Common myeloid progenitor, CD34-positive (primary cell): ENCODE measurements at regions of chr1 and their contacts with region 1.

Region 1: DNA sequence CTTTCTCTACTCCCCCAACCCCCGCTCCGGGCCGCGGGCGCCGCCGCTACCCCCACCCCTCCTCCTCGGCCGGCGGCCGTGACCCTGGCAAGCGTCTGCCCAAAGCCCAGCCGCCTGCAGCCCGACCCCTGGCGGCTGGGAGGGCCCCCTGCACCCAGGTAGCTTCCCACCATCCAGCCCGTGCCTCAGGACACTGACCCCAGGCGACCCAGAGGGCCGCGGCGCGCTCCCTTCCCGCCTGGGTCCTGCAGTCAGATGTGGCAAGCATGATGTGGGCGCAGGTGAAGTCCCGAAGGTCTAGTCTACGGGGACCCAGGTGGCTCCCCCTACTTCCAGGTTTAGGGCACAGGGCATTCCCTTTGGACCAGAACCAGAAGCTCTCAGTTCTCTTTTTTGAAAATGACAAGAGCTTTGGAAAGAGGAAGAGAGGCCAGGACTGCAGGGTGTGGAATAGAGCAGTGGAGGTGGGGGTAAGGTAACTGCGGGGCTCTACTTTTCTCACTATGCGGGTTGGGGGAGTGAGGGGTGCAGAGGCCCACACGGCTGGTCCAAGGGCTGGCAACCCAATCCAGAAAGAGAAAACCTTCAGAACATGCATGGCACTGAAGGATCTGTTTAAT is at the start of gene DENND4B:
- DNase-seq: peak; percentile 77 to 88 (median 87)
- H3K4me3 ChIP-seq: peak within 1 kb of the TSS; percentile 71 to 92 (median 83)
- H3K27ac ChIP-seq: peak within 1 kb of the TSS; percentile 83 to 91
- H3K4me1 ChIP-seq: peaks cover 4 to 33% (median 30%) of the 10 kb centered on the region in 4 experiments
- H3K27me3 ChIP-seq: no peaks in the 10 kb centered on the region

Region 2: GRCh38 chr1:153833171-153833570 is 113.6 kb before region 1 on chr1:
- CTCF ChIA-PET with region 1: no interaction called
- POLR2A ChIA-PET with region 1: no interaction called
- DNase-seq: no peak
- H3K4me3 ChIP-seq: no peak overlapping the region
- H3K27ac ChIP-seq: no peak overlapping the region
- H3K4me1 ChIP-seq: peaks cover 0 to 9% (median 0%) of the 10 kb centered on the region in 4 experiments
- H3K27me3 ChIP-seq: no peaks in the 10 kb centered on the region

Region 3: GRCh38 chr1:153906396-153906795 is 40.3 kb before region 1 on chr1:
- CTCF ChIA-PET with region 1: no interaction called
- POLR2A ChIA-PET with region 1: no interaction called
- DNase-seq: no peak
- H3K4me3 ChIP-seq: no peak overlapping the region
- H3K27ac ChIP-seq: no peak overlapping the region
- H3K4me1 ChIP-seq: no peaks in the 10 kb centered on the region
- H3K27me3 ChIP-seq: no peaks in the 10 kb centered on the region

Region 4: DNA sequence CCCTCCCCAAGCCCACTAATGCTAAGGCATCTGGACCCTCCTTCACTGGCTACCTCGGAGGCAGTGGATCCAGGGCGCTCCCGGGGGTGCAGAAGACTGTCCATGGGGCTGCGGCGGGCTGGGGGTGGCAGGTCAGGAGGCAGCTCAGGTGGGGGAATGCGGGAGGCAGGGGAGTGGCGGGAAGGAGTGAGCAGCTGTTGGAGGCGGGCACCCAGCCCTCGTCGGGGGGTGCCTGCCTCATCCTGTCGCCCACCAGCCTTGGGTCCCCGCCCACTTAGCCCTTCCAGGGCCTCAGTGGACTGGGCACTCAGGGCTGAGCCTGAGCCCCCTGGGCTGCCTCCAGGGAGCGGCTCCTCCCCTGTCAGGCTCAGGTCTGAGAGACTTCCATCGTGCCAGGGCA is 13.3 kb before region 1 on chr1:
- CTCF ChIA-PET with region 1: interaction called, 10 read pairs
- POLR2A ChIA-PET with region 1: interaction called, 4 read pairs
- DNase-seq: no peak
- H3K4me3 ChIP-seq: no peak overlapping the region
- H3K27ac ChIP-seq: no peak overlapping the region
- H3K4me1 ChIP-seq: no peaks in the 10 kb centered on the region
- H3K27me3 ChIP-seq: no peaks in the 10 kb centered on the region

Region 5: DNA sequence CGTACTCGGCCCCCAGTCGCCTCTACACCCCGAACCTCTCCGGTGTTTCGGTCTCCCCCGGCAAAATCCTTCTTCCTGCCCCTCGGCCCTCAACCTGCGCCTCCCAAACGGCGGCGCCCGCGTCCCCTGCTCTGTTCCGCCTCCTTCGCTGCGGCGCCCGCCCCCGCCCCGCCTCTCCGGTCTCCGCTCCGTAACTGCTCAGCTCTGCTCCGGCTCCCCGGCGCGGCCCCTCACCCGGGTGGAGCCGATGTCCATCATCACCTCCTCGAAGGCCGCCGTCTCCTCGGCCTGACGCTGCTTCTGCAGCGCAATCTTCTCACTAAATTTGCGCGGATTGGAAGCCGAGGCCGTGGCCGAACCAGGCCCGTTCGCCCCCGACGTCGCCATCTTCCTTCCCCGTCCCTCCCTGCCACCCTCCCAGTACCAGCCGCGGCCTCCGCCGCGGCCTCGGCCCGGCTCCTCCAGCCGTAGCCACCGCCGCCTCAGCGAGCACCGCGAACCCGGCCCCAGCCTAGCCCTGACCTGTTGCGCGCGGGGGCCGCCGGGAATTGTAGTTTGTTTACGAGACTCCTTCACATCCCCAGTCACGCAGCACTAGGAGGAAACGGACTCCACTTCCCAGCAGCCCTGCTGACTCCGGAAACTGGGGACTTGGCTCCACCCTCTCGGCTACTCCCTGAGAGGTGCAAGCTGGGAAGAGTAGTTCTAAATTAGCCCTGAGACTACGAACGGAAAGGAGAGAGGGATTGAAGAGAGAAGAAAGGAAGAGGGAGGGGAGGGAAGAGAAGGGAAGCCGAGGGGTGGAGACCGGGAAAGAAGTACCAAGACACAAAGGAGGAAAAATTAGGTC is 11.6 kb after region 1 on chr1 and contains the start of gene CRTC2:
- CTCF ChIA-PET with region 1: interaction called, 52 read pairs
- POLR2A ChIA-PET with region 1: interaction called, 17 read pairs
- DNase-seq: peak; percentile 97 to 99 (median 98)
- H3K4me3 ChIP-seq: peak within 1 kb of the TSS; percentile 86 to 97 (median 94)
- H3K27ac ChIP-seq: peak within 1 kb of the TSS; percentile 83 to 90
- H3K4me1 ChIP-seq: peaks cover 20 to 63% (median 51%) of the 10 kb centered on the region in 4 experiments
- H3K27me3 ChIP-seq: no peaks in the 10 kb centered on the region

Region 6: GRCh38 chr1:153967082-153968000 is 20.6 kb after region 1 on chr1 and contains the start of gene CREB3L4:
- CTCF ChIA-PET with region 1: interaction called, 29 read pairs
- POLR2A ChIA-PET with region 1: interaction called, 21 read pairs
- DNase-seq: peak; percentile 97 to 99 (median 99)
- H3K4me3 ChIP-seq: peak within 1 kb of the TSS; percentile 81 to 97 (median 86)
- H3K27ac ChIP-seq: peak within 1 kb of the TSS; percentile 75 to 91
- H3K4me1 ChIP-seq: peaks cover 4 to 61% (median 49%) of the 10 kb centered on the region in 4 experiments
- H3K27me3 ChIP-seq: no peaks in the 10 kb centered on the region